ENCODE measurements at regions of chr20 and their contacts with region 1.

Region 1: GRCh38 chr20:51595058-51595532 is 52.6 kb upstream of the NFATC2 start:
- DNase-seq: peak; percentile 94 to 95
- H3K4me3 ChIP-seq: no peak overlapping the region
- H3K4me3 Mint-ChIP-seq: peak overlapping the region; percentile 10
- H3K27ac Mint-ChIP-seq: no peak overlapping the region
- H3K4me1 ChIP-seq: peaks cover 6% of the 10 kb centered on the region
- H3K4me1 Mint-ChIP-seq: peaks cover 6% of the 10 kb centered on the region
- H3K27me3 ChIP-seq: no peaks in the 10 kb centered on the region
- H3K27me3 Mint-ChIP-seq: no peaks in the 10 kb centered on the region
- CTCF ChIP-seq: peak; percentile 98 to 100

Region 2: DNA sequence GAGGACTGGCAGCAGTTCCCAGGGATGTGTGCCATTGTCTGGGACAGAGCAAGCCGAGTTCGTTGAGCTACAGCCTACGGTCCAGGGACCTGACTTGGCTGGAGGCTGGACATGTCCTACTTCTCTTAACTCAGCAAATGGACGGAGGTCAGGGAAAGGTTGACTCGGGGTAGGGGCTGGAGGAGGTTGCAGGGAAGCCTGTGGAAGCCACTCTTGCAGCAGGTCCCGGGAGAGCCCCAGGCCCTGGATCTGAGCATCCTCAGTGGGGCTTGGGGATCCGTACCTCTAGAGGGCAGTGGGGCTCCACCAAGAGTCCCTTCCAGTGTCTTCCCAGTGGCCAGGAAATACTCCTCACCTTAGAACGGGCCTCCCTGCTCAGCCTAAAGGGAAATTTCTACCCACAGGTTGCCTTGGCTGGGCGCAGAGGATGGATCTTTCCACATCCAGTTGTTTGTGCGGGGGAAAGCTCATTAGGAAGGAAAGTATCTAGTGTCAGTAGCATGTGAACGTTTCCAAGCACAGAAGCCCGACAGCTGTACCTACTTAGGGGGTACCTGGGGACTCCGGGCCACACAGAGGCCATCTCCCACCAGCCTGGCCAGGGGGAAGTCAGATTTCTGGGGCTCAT is 222.8 kb before region 1 on chr20:
- CTCF ChIA-PET with region 1: interaction called, 20 read pairs
- POLR2A ChIA-PET with region 1: no interaction called
- intact Hi-C with region 1: loop called (anchors 1 kb)
- DNase-seq: peak; percentile 88 to 92
- H3K4me3 ChIP-seq: no peak overlapping the region
- H3K4me3 Mint-ChIP-seq: no peak overlapping the region
- H3K27ac Mint-ChIP-seq: no peak overlapping the region
- H3K4me1 ChIP-seq: peaks cover 14% of the 10 kb centered on the region
- H3K4me1 Mint-ChIP-seq: peaks cover 12% of the 10 kb centered on the region
- H3K27me3 ChIP-seq: no peaks in the 10 kb centered on the region
- H3K27me3 Mint-ChIP-seq: peaks cover 6% of the 10 kb centered on the region
- CTCF ChIP-seq: peak; percentile 99

Region 3: GRCh38 chr20:51385646-51386530 is 209.2 kb before region 1 on chr20:
- CTCF ChIA-PET with region 1: interaction called, 58 read pairs
- POLR2A ChIA-PET with region 1: no interaction called
- intact Hi-C with region 1: loop called (anchors 1 kb)
- DNase-seq: peak in 1 of 2 experiments; percentile 68
- H3K4me3 ChIP-seq: no peak overlapping the region
- H3K4me3 Mint-ChIP-seq: no peak overlapping the region
- H3K27ac Mint-ChIP-seq: no peak overlapping the region
- H3K4me1 ChIP-seq: peaks cover 14% of the 10 kb centered on the region
- H3K4me1 Mint-ChIP-seq: peaks cover 20% of the 10 kb centered on the region
- H3K27me3 ChIP-seq: no peaks in the 10 kb centered on the region
- H3K27me3 Mint-ChIP-seq: no peaks in the 10 kb centered on the region
- CTCF ChIP-seq: peak; percentile 81 to 88

Region 4: GRCh38 chr20:51529081-51529681 is 65.9 kb before region 1 on chr20:
- CTCF ChIA-PET with region 1: no interaction called
- POLR2A ChIA-PET with region 1: no interaction called
- intact Hi-C with region 1: loop called (anchors 2 kb)
- DNase-seq: peak; percentile 78 to 86
- H3K4me3 ChIP-seq: 0 out of 2 replicates have a peak overlapping the region, but pooled peaks have one; percentile 6
- H3K4me3 Mint-ChIP-seq: peak overlapping the region; percentile 71
- H3K27ac Mint-ChIP-seq: peak overlapping the region; percentile 59
- H3K4me1 ChIP-seq: peaks cover 73% of the 10 kb centered on the region
- H3K4me1 Mint-ChIP-seq: peaks cover 55% of the 10 kb centered on the region
- H3K27me3 ChIP-seq: no peaks in the 10 kb centered on the region
- H3K27me3 Mint-ChIP-seq: no peaks in the 10 kb centered on the region
- CTCF ChIP-seq: no peak

Region 5: DNA sequence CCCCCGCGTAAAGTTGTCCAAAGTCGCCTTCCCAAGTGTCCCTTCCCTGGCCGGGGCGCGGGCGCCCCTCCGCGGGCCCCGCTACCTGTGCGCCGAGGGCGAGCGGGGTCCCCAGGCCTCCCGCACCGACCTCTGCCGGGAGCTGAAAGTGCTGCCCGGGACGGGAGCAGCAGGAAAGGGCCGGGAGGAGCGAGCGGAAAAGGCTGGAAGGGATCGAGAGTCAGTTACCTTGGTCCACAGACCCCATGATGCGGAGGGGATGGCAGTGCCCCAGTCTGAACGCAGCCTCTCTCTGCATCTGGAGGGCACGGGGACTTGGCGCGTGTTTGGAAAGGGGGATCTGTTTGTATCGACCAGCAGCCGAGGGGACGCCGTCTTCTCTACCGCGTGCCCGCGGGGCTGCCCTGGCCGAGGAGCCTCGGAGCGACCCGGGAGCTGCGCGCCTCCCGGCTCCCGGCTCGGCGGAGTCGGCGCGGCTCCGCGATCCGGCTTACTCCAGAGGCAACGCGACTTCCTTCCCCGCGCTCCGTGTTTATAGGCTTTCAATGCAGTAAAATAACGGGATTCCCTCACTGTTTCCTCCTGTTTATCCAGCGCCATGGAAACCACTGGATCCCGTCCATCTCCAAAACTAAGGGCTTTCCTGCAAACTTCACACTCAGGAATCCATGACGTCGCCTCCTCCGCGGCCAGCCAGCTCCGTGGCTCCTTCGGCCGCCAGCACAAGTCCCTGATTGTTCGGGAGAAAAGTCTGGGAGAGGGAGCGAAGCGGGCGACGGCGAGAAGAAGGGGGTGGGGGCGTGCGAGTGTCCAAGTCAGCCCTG is 32.6 kb before region 1 on chr20:
- CTCF ChIA-PET with region 1: interaction called, 7 read pairs
- POLR2A ChIA-PET with region 1: no interaction called
- intact Hi-C with region 1: loop called (anchors 1 kb)
- DNase-seq: peak; percentile 78 to 83
- H3K4me3 ChIP-seq: peak overlapping the region; percentile 36
- H3K4me3 Mint-ChIP-seq: peak overlapping the region; percentile 88
- H3K27ac Mint-ChIP-seq: peak overlapping the region; percentile 71
- H3K4me1 ChIP-seq: peaks cover 28% of the 10 kb centered on the region
- H3K4me1 Mint-ChIP-seq: peaks cover 37% of the 10 kb centered on the region
- H3K27me3 ChIP-seq: peaks cover 8% of the 10 kb centered on the region
- H3K27me3 Mint-ChIP-seq: peaks cover 25% of the 10 kb centered on the region
- CTCF ChIP-seq: peak; percentile 24 to 63

Region 6: DNA sequence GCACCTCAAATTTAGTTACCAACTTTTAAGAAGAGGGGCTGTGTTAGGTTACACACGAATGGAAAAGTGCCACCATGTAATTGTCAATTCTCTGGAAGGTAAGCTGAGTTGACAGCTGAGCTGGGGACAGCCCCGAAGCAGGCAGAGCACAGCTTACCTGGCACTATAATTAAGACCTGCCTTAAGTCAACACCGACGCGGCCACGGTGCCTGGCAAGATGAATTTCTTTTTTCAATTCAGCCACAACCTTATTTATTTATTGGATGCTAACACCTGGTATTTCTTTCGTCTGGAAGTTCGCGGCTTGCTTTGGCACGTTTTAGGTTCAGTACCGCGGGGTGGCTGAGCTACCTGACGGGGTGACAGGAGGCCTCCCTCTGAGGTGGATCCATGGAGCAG is 12.0 kb before region 1 on chr20:
- CTCF ChIA-PET with region 1: interaction called, 19 read pairs
- POLR2A ChIA-PET with region 1: no interaction called
- intact Hi-C with region 1: no loop called
- DNase-seq: no peak
- H3K4me3 ChIP-seq: peak overlapping the region; percentile 39
- H3K4me3 Mint-ChIP-seq: peak overlapping the region; percentile 66
- H3K27ac Mint-ChIP-seq: no peak overlapping the region
- H3K4me1 ChIP-seq: no peaks in the 10 kb centered on the region
- H3K4me1 Mint-ChIP-seq: peaks cover 7% of the 10 kb centered on the region
- H3K27me3 ChIP-seq: no peaks in the 10 kb centered on the region
- H3K27me3 Mint-ChIP-seq: no peaks in the 10 kb centered on the region
- CTCF ChIP-seq: no peak

Region 7: GRCh38 chr20:52083627-52084232 is 488.6 kb after region 1 on chr20:
- CTCF ChIA-PET with region 1: interaction called, 4 read pairs
- POLR2A ChIA-PET with region 1: no interaction called
- intact Hi-C with region 1: loop called (anchors 1 kb)
- DNase-seq: peak; percentile 86 to 87
- H3K4me3 ChIP-seq: no peak overlapping the region
- H3K4me3 Mint-ChIP-seq: no peak overlapping the region
- H3K27ac Mint-ChIP-seq: peak overlapping the region; percentile 23
- H3K4me1 ChIP-seq: peaks cover 11% of the 10 kb centered on the region
- H3K4me1 Mint-ChIP-seq: peaks cover 28% of the 10 kb centered on the region
- H3K27me3 ChIP-seq: no peaks in the 10 kb centered on the region
- H3K27me3 Mint-ChIP-seq: no peaks in the 10 kb centered on the region
- CTCF ChIP-seq: peak; percentile 95 to 96

Measured in Caco-2 (cell line).